Dendritic cell treated with granulocyte-macrophage colony-stimulating factor and Interleukin-4, amounts not matched to agents 40 ng/mL and 50 ng/mL, for 4 days (primary cell): ENCODE measurements at regions of chr10 and their contacts with region 1.

Region 1: DNA sequence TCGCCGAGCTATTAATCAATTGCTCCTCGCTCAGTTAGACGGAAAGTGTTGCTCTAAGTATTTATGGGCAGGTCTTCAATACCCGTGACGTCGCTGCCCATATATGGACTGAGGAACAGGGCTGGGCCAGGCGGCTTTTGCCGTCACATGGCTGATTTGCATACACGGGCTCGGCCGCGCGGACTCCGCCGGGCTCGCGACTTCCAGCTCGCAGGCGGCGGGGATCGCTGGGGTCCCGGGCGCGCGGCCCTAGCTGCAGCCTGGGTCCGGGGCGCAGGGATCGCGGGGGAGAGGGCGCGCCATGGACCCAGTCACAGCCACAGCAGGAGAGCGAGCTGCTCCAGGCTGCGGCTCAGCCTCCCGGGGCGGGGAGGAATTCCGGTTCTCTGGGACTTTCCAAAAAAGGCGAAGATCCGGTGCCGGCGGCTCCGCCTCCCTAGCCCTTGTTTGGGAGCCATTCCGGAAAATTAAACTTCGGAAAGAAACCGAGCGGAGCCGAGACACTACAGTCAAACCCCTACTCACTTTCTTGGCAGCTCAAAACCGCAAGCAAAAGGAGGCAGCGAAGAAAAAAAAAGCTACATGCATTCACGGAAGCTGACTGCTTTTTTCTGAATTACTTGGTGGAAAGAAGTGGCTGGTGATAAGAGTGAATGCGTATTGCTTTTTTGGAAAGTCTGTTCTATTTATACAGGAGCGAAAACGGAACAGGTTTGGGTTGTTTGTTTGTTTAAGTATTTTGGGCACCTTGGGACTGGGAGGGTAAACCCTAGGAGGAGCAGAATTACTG is at the start of gene EGR2:
- H3K4me3 Mint-ChIP-seq: peak within 1 kb of the TSS; percentile 98
- H3K27ac Mint-ChIP-seq: peak within 1 kb of the TSS; percentile 98
- H3K4me1 Mint-ChIP-seq: peaks cover 57% of the 10 kb centered on the region
- H3K27me3 Mint-ChIP-seq: peaks cover 18% of the 10 kb centered on the region

Region 2: GRCh38 chr10:62437696-62438095 is 378.8 kb before region 1 on chr10:
- intact Hi-C with region 1: loop called (anchors 5 kb)
- H3K4me3 Mint-ChIP-seq: no peak overlapping the region
- H3K27ac Mint-ChIP-seq: no peak overlapping the region
- H3K4me1 Mint-ChIP-seq: peaks cover 13% of the 10 kb centered on the region
- H3K27me3 Mint-ChIP-seq: peaks cover 5% of the 10 kb centered on the region

Region 3: GRCh38 chr10:62610649-62611229 is 205.8 kb before region 1 on chr10:
- intact Hi-C with region 1: loop called (anchors 2 kb)
- H3K4me3 Mint-ChIP-seq: no peak overlapping the region
- H3K27ac Mint-ChIP-seq: peak overlapping the region; percentile 1
- H3K4me1 Mint-ChIP-seq: peaks cover 57% of the 10 kb centered on the region
- H3K27me3 Mint-ChIP-seq: no peaks in the 10 kb centered on the region

Region 4: DNA sequence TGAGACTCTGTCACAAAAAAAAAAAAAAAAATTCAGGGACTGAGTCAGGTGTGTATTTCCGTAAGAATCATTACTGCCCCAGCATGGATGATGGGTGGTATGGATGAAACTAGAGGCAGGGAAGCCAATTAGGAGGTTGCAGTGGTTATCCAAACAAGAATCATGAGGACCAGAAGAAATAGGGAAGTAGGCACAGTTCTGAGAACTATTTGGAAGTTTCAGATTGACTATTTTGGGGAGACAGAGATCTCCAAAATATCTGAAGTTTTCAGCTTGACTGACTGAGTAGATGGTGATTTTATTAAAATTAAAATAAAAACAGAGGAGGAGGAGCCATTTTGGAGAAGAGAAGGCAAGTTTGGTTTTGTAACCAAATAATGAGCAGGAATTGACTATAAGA is 197.2 kb after region 1 on chr10:
- intact Hi-C with region 1: no loop called
- H3K4me3 Mint-ChIP-seq: no peak overlapping the region
- H3K27ac Mint-ChIP-seq: no peak overlapping the region
- H3K4me1 Mint-ChIP-seq: peaks cover 11% of the 10 kb centered on the region
- H3K27me3 Mint-ChIP-seq: peaks cover 28% of the 10 kb centered on the region

Region 5: DNA sequence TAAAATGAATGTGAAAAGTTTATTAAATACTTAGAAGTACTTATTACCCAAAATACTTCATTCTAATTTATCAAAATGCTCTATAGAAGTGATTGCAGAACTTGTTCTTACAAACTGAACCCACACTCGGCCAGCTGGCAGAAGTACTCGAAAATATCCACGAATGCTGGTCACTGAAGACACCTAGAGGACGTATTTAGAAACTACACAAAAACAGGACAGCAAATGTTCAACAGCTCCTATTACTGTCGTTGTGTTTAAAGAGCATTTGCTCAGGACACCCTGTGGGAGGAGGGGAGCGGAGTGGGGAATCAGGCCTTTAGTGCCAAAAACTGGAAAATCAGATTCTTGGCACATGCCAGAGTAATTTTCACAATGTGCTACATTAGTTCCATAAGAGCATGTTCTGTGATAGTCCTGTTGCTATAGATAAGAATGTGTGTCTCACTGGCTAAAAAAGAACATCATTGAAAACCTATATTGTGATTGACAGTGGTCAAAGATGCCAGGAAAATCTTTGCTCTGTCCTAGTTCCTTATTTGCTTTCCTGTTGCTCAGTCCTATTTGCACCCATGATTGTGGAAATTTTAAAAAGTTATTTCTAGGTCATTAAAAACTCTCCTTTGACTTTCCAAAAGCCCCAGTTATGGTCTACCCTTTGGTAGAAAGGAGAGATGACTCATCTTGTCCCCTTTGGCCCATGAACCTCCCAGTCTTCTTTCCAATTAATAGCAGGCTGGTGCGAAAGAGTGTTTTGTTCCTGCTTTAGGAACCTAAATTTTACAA is 267.6 kb after region 1 on chr10:
- intact Hi-C with region 1: loop called (anchors 5 kb)
- H3K4me3 Mint-ChIP-seq: no peak overlapping the region
- H3K27ac Mint-ChIP-seq: no peak overlapping the region
- H3K4me1 Mint-ChIP-seq: no peaks in the 10 kb centered on the region
- H3K27me3 Mint-ChIP-seq: peaks cover 22% of the 10 kb centered on the region

Region 6: DNA sequence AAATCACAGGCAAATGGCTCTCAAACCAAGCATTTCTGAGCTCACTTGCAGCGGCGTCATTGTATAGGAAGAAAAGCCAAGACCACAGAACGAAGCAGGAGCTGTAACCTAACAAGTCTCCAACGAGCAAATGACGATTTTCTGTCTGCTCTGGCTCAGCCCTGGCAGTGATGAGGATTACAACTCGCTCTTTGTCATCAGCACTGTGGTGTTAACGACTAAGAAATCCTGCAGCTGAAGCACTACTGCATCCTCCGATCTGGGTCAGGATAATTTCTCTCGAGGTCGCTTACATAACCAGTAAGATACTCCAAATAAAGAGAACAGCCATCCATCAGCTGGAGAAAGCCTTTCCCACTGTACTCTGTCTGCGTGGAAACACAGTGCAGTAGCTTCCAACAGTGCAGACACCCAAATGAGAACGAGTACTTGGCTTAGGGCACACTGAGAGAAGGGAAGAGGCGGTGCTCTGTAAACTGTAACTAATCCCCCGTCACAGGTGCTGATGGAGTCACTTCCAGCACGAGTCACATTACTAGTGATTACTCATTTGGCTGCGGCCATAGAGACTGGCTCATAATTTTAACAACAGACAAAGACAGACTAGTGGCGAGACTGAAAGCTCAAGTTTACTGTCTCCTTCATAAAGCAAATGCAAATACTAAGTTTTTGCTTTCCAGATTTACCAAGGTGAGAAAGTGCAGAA is 452.4 kb after region 1 on chr10:
- intact Hi-C with region 1: loop called (anchors 10 kb)
- H3K4me3 Mint-ChIP-seq: peak overlapping the region; percentile 88
- H3K27ac Mint-ChIP-seq: peak overlapping the region; percentile 96
- H3K4me1 Mint-ChIP-seq: peaks cover 19% of the 10 kb centered on the region
- H3K27me3 Mint-ChIP-seq: no peaks in the 10 kb centered on the region